ENCODE measurements at regions of chr20 and their contacts with region 1.

Region 1: GRCh38 chr20:45293041-45294002 is 13.3 kb upstream of the RBPJL start:
- DNase-seq: peak; percentile 64 to 99
- H3K4me3 ChIP-seq: peak overlapping the region; percentile 35 to 63 (median 54)
- H3K27ac ChIP-seq: no peak overlapping the region
- H3K4me1 ChIP-seq: peaks cover 0 to 3% (median 0%) of the 10 kb centered on the region in 4 experiments; a peak in 3 of 7 replicates
- H3K27me3 ChIP-seq: peaks cover 0 to 20% (median 11%) of the 10 kb centered on the region in 4 experiments; a peak in 6 of 7 replicates
- CTCF ChIP-seq: peak; percentile 88 to 96 (median 89)
- EP300 ChIP-seq: no peak
- POLR2A ChIP-seq: peak in 1 of 2 experiments; percentile 76; a peak in 2 of 3 replicates
- RAD21 ChIP-seq: peak; percentile 37 to 50

Region 2: DNA sequence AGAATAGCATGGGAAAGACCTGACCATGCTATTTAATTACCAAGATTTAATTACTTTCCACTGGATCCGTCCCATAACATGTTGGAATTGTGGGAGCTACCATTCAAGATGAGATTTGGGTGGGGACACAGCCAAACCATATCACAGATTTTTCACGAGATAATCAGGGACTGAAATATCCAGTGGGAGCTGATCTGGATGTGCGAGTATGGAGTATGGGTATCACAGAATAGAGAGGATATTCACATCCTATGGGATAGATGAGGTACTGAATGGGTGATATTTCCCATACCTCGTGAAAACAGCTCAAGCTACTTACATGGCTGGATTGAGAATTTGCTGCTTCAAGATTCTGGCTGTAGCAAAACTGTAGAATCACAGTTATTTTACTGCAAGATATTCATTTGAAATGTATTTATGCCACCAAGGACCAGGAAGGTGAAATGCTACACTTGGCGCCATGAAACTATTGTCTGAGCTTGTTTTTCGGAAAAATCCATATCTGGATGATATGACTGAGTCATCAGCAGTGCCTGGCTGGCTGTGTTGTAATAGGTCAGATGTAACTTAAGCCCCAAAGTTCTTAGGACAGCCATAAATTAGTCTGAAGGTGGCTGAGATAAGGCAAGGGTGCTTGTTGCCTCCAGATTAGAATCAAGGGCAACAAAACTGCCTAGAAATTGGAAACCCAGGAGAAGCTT is 222.2 kb before region 1 on chr20:
- CTCF ChIA-PET with region 1: no interaction called
- POLR2A ChIA-PET with region 1: no interaction called
- DNase-seq: no peak
- H3K4me3 ChIP-seq: no peak overlapping the region
- H3K27ac ChIP-seq: no peak overlapping the region
- H3K4me1 ChIP-seq: peaks cover 0 to under 1% (median 0%) of the 10 kb centered on the region in 4 experiments; a peak in 1 of 7 replicates
- H3K27me3 ChIP-seq: no peaks in the 10 kb centered on the region
- CTCF ChIP-seq: no peak
- EP300 ChIP-seq: no peak
- POLR2A ChIP-seq: no peak
- RAD21 ChIP-seq: no peak

Region 3: GRCh38 chr20:45111799-45112471 is 181.4 kb before region 1 on chr20:
- CTCF ChIA-PET with region 1: interaction called, 67 read pairs
- POLR2A ChIA-PET with region 1: interaction called, 4 read pairs
- DNase-seq: peak in 1 of 2 experiments; percentile 75
- H3K4me3 ChIP-seq: no peak overlapping the region; a peak in 2 of 8 replicates
- H3K27ac ChIP-seq: no peak overlapping the region
- H3K4me1 ChIP-seq: peaks cover 0 to 7% (median 2%) of the 10 kb centered on the region in 4 experiments; a peak in 5 of 7 replicates
- H3K27me3 ChIP-seq: no peaks in the 10 kb centered on the region
- CTCF ChIP-seq: peak; percentile 63 to 69 (median 64)
- EP300 ChIP-seq: no peak
- POLR2A ChIP-seq: no peak
- RAD21 ChIP-seq: peak; percentile 50 to 61

Region 4: DNA sequence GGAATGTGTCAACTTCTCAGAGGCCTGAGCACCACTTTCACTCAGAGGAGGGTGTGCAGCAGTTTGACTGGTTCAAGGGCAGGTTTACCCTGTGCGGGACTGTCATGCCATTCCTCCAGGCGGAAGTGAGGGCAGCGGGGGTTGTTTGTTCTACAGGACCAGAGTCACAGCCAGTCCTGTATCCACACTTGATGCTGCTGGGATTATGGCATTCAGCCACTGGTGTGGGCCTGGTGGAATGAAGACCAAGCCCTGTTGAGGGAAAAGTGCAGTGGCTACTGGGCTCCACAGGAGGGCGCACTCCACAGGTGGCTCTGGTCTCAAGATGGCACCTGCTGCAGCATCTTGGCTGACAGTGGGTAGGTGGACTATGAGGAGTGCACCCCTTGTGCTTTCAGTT is 57.3 kb before region 1 on chr20:
- CTCF ChIA-PET with region 1: interaction called, 31 read pairs
- POLR2A ChIA-PET with region 1: no interaction called
- DNase-seq: peak; percentile 34 to 84
- H3K4me3 ChIP-seq: no peak overlapping the region
- H3K27ac ChIP-seq: no peak overlapping the region
- H3K4me1 ChIP-seq: no peaks in the 10 kb centered on the region; a peak in 1 of 7 replicates
- H3K27me3 ChIP-seq: no peaks in the 10 kb centered on the region; a peak in 1 of 7 replicates
- CTCF ChIP-seq: peak; percentile 94 to 98 (median 94)
- EP300 ChIP-seq: no peak
- POLR2A ChIP-seq: no peak
- RAD21 ChIP-seq: peak; percentile 69 to 81

Region 5: DNA sequence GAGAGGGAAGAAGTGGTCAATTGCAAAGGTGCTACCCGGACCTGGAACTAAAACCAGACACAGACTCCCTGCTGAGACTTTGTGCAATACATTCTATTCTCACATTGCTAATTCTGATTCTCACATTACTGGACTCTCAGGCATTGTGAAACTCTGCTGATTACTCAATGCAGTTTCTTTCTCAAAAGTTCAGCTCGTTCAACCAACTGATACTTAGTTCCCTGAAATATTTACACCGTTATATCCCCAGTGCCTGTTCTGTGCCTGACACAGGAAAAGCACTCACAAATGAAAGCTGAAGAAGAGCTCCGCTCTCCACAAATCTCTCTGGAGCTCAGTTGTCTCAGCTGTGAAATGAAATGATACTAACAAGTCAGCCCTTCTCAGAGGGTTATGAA is 38.5 kb before region 1 on chr20:
- CTCF ChIA-PET with region 1: interaction called, 14 read pairs
- POLR2A ChIA-PET with region 1: no interaction called
- DNase-seq: no peak
- H3K4me3 ChIP-seq: no peak overlapping the region
- H3K27ac ChIP-seq: no peak overlapping the region
- H3K4me1 ChIP-seq: peaks cover 0 to 6% (median 3%) of the 10 kb centered on the region in 4 experiments; a peak in 5 of 7 replicates
- H3K27me3 ChIP-seq: peaks cover 0 to 2% (median 0%) of the 10 kb centered on the region in 4 experiments; a peak in 2 of 7 replicates
- CTCF ChIP-seq: no peak
- EP300 ChIP-seq: no peak
- POLR2A ChIP-seq: no peak
- RAD21 ChIP-seq: no peak

Region 6: GRCh38 chr20:45306431-45306982 is 13.2 kb after region 1 on chr20 and contains the start of gene RBPJL:
- CTCF ChIA-PET with region 1: interaction called, 104 read pairs
- POLR2A ChIA-PET with region 1: interaction called, 18 read pairs
- DNase-seq: peak in 1 of 2 experiments; percentile 91
- H3K4me3 ChIP-seq: peak within 1 kb of the TSS in 1 of 4 experiments; percentile 45; a peak in 2 of 8 replicates
- H3K27ac ChIP-seq: no peak within 1 kb of the TSS
- H3K4me1 ChIP-seq: peaks cover 0 to 14% (median 7%) of the 10 kb centered on the region in 4 experiments; a peak in 5 of 7 replicates
- H3K27me3 ChIP-seq: peaks cover 0 to 9% (median 2%) of the 10 kb centered on the region in 4 experiments; a peak in 5 of 7 replicates
- CTCF ChIP-seq: peak; percentile 90 to 95 (median 93)
- EP300 ChIP-seq: peak in 1 of 2 experiments; percentile 32; a peak in 1 of 3 replicates
- POLR2A ChIP-seq: no peak
- RAD21 ChIP-seq: peak in 1 of 2 experiments; percentile 39; a peak in 3 of 4 replicates
- total RNA-seq, gene RBPJL: 0.67 and 0.73 TPM in 2 replicates

Measured in H1 (cell line).